Mammary epithelial cell (primary cell): ENCODE measurements at regions of chr2 and their contacts with region 1.

Region 1: GRCh38 chr2:206981739-206982340 is 42.5 kb downstream of the CPO start:
- DNase-seq: peak; percentile 64
- H3K4me3 ChIP-seq: no peak overlapping the region
- H3K27ac ChIP-seq: no peak overlapping the region
- H3K4me1 ChIP-seq: peaks cover 21% of the 10 kb centered on the region
- H3K27me3 ChIP-seq: no peaks in the 10 kb centered on the region
- CTCF ChIP-seq: peak; percentile 90 to 92

Region 2: DNA sequence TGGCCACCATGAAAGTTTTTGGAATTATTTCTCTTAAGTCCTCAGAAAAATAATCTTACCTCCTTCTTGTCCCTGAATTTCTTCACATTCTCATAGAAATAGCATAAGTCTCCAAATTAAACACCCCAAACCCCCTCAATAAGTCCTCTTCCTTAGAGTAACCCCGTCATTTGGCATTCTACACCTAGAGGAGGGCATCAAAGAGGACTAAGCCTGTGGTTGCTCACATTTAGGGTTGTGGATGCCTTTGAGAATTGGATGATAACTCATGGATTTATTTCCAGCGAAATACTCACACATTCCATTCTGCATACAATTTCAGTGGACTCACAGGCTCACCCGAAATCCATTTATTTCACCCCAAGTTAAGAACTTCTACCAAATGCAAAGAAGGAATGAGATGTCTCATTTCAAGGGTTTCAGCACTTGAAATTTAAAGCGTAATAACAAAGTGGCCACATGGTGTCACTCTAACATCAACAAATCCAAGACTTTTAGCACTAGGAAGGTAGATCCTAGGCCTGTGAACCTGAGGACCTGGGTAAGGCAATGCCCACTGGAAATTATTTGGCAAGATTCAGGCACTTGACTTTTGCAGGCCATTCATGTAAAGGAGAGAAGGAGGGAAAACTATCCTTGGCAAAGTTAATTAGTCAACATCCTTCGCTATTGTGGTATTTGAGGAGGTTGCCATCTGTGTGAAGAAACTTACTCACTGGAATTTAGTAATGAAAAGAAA is 288.3 kb before region 1 on chr2:
- CTCF ChIA-PET with region 1: no interaction called
- dilution Hi-C with region 1: no loop called
- in situ Hi-C with region 1: no loop called
- intact Hi-C with region 1: loop called (anchors 1 kb)
- DNase-seq: peak; percentile 55
- H3K4me3 ChIP-seq: no peak overlapping the region
- H3K27ac ChIP-seq: no peak overlapping the region
- H3K4me1 ChIP-seq: no peaks in the 10 kb centered on the region
- H3K27me3 ChIP-seq: no peaks in the 10 kb centered on the region
- CTCF ChIP-seq: peak; percentile 66 to 68

Region 3: DNA sequence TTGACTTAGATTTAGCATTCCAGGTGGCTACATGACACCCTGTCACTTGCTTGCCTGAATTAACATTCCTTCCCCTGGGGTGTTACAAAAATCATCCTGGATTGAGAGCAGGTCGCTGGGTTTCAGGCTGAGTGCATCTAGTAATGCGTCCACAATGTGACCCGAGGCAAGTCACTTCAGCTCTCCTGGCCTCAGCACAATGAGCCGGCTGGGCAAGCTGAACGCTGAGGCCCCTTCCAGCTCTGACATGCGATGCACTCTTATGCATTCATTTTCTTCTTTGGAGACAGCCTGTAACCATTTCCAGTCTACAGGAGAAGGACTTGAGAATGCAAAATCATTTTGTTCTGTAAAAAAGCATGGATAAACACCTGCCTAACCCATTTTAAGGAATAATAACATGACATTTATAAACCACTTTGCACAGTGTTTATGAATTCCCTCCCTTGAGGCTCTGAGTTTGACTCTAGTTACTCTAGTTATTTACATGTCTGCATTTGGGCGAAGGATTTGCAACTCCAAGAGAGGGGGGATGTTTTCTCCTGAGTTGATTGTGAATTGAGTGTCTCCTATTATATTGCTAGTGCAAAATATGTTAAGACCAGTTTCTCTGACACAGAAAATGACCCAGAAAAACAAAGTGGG is 105.5 kb before region 1 on chr2:
- CTCF ChIA-PET with region 1: no interaction called
- dilution Hi-C with region 1: no loop called
- in situ Hi-C with region 1: no loop called
- intact Hi-C with region 1: no loop called
- DNase-seq: no peak
- H3K4me3 ChIP-seq: no peak overlapping the region
- H3K27ac ChIP-seq: no peak overlapping the region
- H3K4me1 ChIP-seq: no peaks in the 10 kb centered on the region
- H3K27me3 ChIP-seq: no peaks in the 10 kb centered on the region
- CTCF ChIP-seq: no peak

Region 4: DNA sequence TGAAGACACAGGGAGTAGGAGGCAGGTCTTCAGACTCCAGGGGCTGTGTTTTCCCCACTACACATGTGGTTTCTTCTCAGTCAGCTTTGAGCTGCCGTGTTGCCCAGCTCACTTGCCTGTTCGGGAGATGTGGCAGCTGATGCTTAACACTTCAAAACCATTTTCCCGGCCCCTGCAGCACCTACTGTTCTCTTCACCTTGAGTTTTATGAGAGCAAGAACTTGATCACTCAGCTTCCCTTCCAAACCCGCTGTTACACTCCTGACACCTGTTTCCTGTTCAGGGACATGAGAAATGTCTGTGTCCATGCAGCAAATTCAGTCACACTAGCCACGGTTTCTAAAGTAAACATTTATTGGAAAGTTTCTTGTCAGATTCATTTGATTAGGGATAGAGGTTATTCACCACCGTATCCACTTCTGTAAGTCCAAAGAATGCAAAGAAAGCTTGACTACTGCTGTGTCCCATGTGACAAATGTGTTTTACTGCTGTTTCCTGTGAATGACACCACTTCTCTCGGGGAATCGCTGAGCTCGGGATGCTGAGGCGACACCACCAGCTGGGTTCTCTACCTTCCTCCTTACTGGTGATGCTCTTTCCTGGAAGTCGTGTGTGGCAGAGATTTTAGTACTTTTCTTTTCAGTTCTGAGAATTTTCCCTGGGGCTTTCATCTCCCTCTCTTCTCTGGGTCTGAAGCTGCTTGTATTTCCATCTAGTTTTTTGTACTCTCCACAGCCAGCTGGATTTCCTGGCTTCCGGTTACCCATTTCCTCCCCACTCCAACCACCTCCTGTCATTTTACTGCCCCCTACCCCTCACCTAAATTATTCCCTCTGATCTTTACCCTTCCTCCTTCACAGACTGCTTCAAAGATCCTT is 92.2 kb after region 1 on chr2:
- CTCF ChIA-PET with region 1: no interaction called
- dilution Hi-C with region 1: no loop called
- in situ Hi-C with region 1: no loop called
- intact Hi-C with region 1: loop called (anchors 1 kb)
- DNase-seq: no peak
- H3K4me3 ChIP-seq: no peak overlapping the region
- H3K27ac ChIP-seq: no peak overlapping the region
- H3K4me1 ChIP-seq: no peaks in the 10 kb centered on the region
- H3K27me3 ChIP-seq: no peaks in the 10 kb centered on the region
- CTCF ChIP-seq: no peak

Region 5: DNA sequence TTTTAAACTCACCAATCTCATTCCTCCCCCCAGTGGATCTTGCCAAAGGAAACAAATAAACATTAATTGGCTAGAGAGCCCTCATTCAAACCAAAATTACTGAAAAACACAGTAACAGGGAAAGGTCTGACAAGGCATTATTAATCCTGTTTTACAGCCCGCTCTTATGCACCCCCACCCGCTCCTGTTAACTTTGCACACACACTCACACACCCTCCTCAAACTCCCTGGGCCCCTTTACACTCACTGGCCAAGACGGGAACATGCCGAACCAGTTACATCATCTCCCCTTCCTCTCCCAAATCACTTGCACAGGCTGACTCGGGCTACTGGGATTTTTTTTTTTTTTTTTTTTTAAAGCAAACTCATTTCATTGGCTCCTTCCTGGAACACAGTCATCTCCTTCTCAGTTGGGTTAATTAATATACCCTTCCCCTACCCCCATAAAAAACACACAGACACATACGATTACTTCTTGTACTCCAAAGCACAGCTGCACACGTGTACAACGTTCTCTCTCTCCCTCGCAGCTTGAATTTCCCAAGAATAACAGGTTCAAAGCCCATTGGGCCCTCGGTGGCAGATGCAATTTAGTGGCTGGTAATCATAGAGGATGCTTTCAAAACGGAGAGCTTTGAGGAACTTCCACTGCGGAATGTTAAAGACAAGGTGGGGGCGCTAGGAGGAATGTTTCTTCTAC is 152.1 kb after region 1 on chr2:
- CTCF ChIA-PET with region 1: no interaction called
- dilution Hi-C with region 1: no loop called
- in situ Hi-C with region 1: no loop called
- intact Hi-C with region 1: loop called (anchors 10 kb)
- DNase-seq: no peak
- H3K4me3 ChIP-seq: no peak overlapping the region
- H3K27ac ChIP-seq: no peak overlapping the region
- H3K4me1 ChIP-seq: peaks cover 32% of the 10 kb centered on the region
- H3K27me3 ChIP-seq: no peaks in the 10 kb centered on the region
- CTCF ChIP-seq: no peak

Region 6: DNA sequence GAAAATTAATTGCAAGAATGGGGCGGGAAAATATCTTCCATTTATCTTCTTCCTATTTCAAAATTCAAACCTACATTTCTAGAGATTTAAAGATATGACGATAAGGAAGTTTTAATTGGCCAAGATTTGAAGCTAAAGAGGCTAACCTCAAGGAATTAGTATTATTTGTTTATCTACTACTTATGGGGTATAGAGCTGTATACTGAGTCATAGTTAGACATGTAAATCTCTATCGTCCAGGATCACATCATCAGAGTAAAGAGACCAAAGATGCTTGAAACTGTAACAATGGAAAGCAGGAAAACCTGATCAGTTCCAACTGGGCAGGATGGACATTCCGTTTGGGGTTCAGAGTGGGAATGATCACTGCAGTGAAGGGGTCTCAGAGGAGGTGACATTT is 279.1 kb after region 1 on chr2:
- CTCF ChIA-PET with region 1: no interaction called
- dilution Hi-C with region 1: no loop called
- in situ Hi-C with region 1: no loop called
- intact Hi-C with region 1: loop called (anchors 2 kb)
- DNase-seq: no peak
- H3K4me3 ChIP-seq: no peak overlapping the region
- H3K27ac ChIP-seq: no peak overlapping the region
- H3K4me1 ChIP-seq: peaks cover 33% of the 10 kb centered on the region
- H3K27me3 ChIP-seq: no peaks in the 10 kb centered on the region
- CTCF ChIP-seq: no peak

Region 7: DNA sequence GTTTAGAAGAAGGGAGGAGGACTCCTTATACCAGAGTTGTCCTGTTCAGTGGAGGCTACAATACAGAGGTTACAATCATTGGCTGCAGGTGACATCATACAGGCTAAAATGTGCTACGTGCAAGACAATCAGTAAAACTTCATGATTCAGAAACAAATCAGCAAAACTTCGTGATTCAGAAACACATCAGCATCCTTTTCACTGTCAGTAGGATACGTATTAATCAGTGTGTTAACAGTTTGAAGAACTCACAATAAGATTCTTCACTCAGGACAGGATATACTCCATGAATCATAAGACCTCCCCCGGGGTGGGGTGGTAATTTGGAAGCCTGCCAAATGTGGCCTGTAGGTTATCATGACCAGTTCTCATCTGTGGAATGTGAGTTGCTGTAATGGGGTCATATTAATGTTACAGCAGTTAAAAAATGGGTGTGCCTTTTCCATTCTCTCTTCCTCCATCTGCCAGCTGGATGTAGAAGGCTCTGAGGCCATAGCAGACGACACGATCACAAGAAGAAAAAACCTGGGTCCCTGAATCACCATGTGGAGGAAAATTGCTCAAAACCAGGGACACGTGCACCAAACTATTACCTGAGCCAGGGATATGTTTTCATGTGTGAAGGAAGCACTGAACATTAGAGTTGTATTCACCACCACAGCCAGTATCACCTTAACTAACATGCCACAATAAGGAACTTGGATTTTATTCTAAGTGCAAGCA is 413.1 kb after region 1 on chr2:
- CTCF ChIA-PET with region 1: no interaction called
- dilution Hi-C with region 1: no loop called
- in situ Hi-C with region 1: no loop called
- intact Hi-C with region 1: loop called (anchors 1 kb)
- DNase-seq: peak; percentile 100
- H3K4me3 ChIP-seq: no peak overlapping the region
- H3K27ac ChIP-seq: peak overlapping the region; percentile 98
- H3K4me1 ChIP-seq: peaks cover 36% of the 10 kb centered on the region
- H3K27me3 ChIP-seq: no peaks in the 10 kb centered on the region
- CTCF ChIP-seq: no peak